ENCODE measurements at regions of chr2 and their contacts with region 1.

Region 1: DNA sequence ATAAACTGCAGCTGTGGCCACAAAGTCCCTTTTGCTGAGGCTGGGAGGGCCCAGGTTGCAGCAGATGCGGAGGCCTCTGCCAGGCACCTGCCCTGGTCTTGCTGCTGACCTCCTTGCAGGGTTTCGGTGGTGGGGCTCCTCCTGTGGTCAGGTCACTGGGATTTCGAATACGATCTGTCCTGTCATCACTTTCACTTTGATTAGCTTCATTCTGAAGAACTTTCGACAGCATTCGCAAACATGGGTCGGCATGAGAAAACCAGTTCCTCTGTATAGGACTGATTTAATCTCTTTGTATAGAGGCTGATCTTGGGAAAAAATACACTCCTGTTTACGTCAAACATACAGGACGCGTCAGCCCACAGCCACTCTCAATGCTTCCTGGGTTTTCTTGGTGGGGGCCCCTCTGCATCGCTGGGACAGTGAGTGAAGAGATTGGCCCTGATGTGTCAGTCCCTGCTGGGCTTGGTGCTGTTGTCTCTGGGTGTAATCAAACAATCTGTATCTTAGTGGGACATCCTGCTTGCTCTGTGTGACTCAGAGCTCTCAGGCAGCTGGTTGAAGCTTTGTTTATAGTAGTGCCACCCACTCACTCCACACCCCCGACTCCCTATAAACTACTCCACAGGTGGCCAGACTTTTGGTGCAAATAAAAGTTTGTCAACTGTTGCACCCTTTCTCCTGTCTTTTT is 209.4 kb upstream of the CXCR4 start:
- DNase-seq: peak; percentile 69
- H3K4me3 Mint-ChIP-seq: peak overlapping the region; percentile 43
- H3K27ac Mint-ChIP-seq: peak overlapping the region; percentile 91
- H3K4me1 Mint-ChIP-seq: peaks cover 68% of the 10 kb centered on the region
- H3K27me3 Mint-ChIP-seq: peaks cover 4% of the 10 kb centered on the region

Region 2: DNA sequence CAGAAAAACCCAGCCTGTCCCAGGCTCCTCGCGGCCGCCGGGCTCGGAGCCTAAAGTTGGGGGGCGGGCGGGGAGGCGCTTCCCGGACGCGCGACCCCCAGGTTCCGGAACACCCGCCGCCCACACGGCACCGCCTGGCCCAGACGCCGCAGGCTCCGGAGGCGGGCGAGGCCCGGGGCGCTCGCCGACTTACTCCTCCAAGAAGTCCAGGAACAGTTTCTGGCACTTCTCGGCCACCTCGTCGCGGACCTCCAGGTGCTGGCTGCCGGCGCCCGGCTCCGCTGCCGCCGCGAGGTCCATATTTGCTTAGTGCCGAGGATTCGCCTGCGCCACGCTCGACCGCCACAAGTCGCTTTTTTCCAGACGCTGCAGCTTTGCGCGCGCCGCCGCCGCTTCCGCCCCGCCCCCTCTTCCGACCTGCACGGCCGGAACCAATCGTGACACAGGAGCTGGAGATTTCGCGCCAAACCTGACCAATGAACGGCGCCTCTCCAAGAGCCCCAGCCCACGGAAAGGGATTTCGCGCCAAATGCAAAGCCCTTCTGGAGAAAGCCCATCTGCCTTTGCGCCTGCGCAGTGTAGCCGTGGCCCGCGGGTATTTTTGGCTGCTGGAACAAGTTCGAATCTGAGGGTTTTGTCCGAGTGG is 451.1 kb before region 1 on chr2 and contains the start of gene MCM6:
- intact Hi-C with region 1: loop called (anchors 1 kb)
- DNase-seq: peak; percentile 99
- H3K4me3 Mint-ChIP-seq: peak within 1 kb of the TSS; percentile 98
- H3K27ac Mint-ChIP-seq: peak within 1 kb of the TSS; percentile 99
- H3K4me1 Mint-ChIP-seq: peaks cover 45% of the 10 kb centered on the region
- H3K27me3 Mint-ChIP-seq: peaks cover 2% of the 10 kb centered on the region
- total RNA-seq, gene MCM6: 176 and 177 TPM in 2 replicates

Region 3: DNA sequence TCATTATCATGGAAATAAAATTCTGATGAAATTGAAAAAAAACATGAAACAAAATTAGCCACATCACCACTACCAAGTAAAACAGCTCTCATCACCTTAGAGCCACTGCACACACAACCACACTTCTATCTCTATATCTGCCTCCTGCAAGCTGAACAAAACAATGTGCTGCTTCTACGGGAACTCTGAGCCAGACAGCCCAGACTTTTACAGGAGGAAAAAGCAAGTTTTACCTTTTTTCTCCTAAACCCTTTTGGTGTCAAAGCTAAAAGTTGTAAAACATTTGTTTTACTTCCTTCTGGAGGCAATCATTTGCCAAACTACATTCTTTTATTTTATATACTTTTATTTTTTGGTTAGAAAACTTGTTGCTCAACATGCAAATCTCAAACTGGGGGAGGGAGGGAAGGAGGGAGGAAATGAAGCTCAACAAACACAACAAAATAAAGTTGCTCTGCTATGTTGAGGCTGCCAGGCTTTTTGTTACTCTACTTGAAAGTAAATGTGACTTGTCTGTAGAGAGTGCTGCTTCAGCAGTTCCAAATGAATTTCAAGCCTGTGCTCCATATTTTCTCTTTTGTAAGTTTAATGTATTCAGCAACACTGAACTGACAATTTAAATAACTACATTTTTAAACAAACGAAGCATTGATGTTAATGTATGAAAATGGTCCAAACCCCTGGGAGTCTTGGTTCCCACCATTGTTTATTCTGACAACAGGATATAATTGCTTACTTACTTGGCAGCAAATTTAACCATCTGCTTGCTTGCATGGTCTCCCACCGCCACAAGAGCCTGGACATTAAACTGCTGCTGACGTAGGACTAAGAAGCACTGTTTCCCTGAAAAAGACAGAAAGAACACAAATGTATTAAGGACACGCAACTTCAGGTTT is 366.4 kb before region 1 on chr2:
- intact Hi-C with region 1: loop called (anchors 2 kb)
- DNase-seq: peak; percentile 16
- H3K4me3 Mint-ChIP-seq: peak overlapping the region; percentile 28
- H3K27ac Mint-ChIP-seq: peak overlapping the region; percentile 80
- H3K4me1 Mint-ChIP-seq: peaks cover 55% of the 10 kb centered on the region
- H3K27me3 Mint-ChIP-seq: no peaks in the 10 kb centered on the region

Region 4: DNA sequence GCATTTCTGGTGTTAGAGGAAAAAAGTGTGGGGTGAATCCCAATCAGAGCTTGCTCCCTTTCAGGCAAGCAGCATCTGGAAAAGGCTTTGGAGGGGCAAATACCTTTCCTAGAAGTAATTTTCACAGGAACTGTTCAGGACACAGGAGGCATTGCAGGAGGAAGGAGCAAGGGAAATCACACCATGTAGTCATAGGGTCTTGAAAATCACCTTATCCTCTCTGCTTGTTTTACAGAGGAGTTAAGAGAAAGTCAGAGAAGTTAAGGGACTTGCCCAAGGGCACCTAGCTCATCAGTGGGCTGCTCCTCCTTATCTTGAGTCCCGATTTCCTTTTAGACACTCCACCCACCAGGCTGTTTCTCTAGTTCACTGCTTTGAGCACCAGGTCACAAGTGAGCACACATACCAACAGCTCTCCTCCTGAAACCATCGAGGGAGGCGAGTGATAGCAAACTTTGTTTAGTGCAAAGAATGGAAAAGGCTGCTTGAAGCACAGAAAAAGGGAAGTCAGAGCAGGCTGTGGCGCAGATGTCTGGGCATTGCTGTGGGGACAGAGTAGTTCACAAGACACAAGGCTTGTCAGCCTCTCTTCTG is 120.2 kb before region 1 on chr2:
- intact Hi-C with region 1: loop called (anchors 1 kb)
- DNase-seq: no peak
- H3K4me3 Mint-ChIP-seq: no peak overlapping the region
- H3K27ac Mint-ChIP-seq: peak overlapping the region; percentile 92
- H3K4me1 Mint-ChIP-seq: peaks cover 33% of the 10 kb centered on the region
- H3K27me3 Mint-ChIP-seq: peaks cover 2% of the 10 kb centered on the region

Region 5: GRCh38 chr2:136310797-136311603 is 16.3 kb before region 1 on chr2:
- intact Hi-C with region 1: loop called (anchors 1 kb)
- DNase-seq: no peak
- H3K4me3 Mint-ChIP-seq: peak overlapping the region; percentile 38
- H3K27ac Mint-ChIP-seq: peak overlapping the region; percentile 83
- H3K4me1 Mint-ChIP-seq: peaks cover 38% of the 10 kb centered on the region
- H3K27me3 Mint-ChIP-seq: peaks cover 4% of the 10 kb centered on the region

Measured in activated T-helper 1 cell treated with anti-CD3 and anti-CD28 coated beads, Interleukin-12 subunit alpha, Interleukin-12 subunit beta, Interleukin-2, Interleukin-4 antibody, amounts not matched to agents 30 ng/mL and 10 ng/mL and 1 ng/mL, durations not matched to agents 14 hours and 24 hours and 36 hours (primary cell).